Panc1 (cell line): ENCODE measurements at regions of chr5 and their contacts with region 1.

Region 1: DNA sequence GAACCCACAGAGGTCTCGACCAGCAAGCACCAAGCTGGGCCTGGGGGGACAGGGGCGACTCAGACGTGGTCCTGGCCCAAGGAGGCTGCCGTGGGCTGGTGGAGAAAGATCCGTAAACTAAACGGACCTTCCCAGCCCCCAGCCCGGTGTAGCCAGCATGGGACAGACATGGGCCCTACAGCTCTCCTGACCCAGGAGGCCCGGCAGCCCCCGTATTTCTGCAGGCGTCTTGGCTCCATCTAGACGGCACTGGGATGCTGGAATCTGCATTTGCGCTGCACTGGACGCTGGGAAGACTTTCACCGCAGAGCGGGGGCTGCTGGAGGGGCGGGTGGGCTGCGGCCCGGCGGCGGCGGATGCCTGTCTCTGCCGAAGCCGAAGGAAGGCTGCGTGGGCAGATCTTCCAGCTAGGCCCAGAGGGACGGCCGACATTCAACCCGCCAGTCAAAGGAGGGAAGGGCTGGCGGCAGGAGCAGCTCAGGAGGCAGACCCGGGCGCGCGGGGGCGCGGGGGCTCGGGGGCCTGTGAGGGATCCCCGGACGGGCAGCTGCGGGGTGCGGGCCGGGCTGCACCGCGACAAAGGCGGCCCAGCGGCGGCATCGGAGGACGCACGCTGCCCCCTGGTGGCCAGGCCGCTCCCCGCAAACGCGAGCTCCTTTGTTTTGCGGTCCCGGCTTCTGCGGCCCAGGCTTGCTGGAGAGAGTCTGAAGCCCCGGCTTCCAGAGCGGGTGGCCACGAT is 266.2 kb downstream of the NSG2 start:
- DNase-seq: no peak
- ATAC-seq: peak; percentile 92
- H3K4me3 ChIP-seq: peak overlapping the region; percentile 29 to 33
- H3K27ac ChIP-seq: no peak overlapping the region
- H3K4me1 ChIP-seq: no peaks in the 10 kb centered on the region
- H3K27me3 ChIP-seq: peaks cover 7% of the 10 kb centered on the region; the same call in 1 of the 2 replicates
- CTCF ChIP-seq: peak; percentile 95

Region 2: DNA sequence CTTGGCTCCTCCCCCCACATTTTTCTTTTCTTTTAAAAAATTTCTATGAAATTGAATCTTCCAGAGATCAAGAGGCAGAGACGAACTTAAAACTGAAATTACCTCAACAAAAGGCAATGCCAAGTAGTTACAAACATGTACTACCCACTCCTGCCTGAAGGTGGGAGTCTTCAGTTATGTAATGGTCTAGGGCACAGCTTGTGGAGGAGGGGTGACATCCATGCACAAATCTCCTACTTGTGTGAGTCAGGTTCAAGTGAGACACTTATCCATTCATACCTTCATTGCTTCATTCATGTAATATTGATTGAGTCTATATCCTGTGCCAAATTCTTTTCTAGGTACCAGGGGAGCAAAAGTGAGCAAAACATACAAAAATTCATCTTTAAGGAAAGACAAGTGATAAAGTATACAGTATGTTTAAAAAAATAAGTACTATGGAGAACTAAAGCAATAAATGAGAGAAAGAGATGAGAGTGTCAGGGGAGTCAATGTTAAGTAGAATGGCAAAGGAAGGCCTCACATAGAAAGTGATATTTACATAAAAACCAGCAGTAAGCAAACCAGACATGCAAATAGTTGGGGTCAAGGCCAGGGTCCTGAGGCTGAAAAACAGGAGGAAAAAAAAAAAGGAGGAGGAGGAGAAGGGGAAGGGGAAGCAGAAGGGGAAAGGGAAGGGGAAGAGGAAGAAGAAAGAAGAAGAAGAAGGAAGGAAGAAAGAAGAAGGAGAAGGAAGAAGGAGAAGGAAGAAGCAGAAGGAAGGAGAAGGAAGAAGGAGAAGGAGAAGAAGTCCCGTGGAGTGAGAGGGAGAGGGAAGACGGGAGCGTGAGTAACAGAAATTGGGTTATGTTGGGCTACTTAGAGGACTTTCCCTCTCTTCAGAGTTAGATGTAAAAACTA is 291.1 kb before region 1 on chr5:
- CTCF ChIA-PET with region 1: interaction called, 7 read pairs
- POLR2A ChIA-PET with region 1: no interaction called
- in situ Hi-C with region 1: no loop called
- intact Hi-C with region 1: loop called (anchors 1 kb)
- DNase-seq: peak; percentile 45
- ATAC-seq: peak; percentile 90
- H3K4me3 ChIP-seq: no peak overlapping the region
- H3K27ac ChIP-seq: no peak overlapping the region
- H3K4me1 ChIP-seq: no peaks in the 10 kb centered on the region
- H3K27me3 ChIP-seq: peaks cover 22% of the 10 kb centered on the region
- CTCF ChIP-seq: peak; percentile 77

Region 3: GRCh38 chr5:174045470-174046025 is 266.2 kb before region 1 on chr5 and contains the start of gene NSG2:
- CTCF ChIA-PET with region 1: interaction called, 21 read pairs
- POLR2A ChIA-PET with region 1: no interaction called
- in situ Hi-C with region 1: no loop called
- intact Hi-C with region 1: loop called (anchors 2 kb)
- DNase-seq: peak; percentile 38
- ATAC-seq: peak; percentile 100
- H3K4me3 ChIP-seq: no peak within 1 kb of the TSS; a peak in 1 of 4 replicates
- H3K27ac ChIP-seq: no peak within 1 kb of the TSS
- H3K4me1 ChIP-seq: no peaks in the 10 kb centered on the region
- H3K27me3 ChIP-seq: peaks cover 5% of the 10 kb centered on the region; the same call in 1 of the 2 replicates
- CTCF ChIP-seq: peak; percentile 78
- total RNA-seq, gene NSG2: not detected